ENCODE measurements at regions of chr11 and their contacts with region 1.

Region 1: GRCh38 chr11:34492806-34493414 is 20.7 kb downstream of the ELF5 start:
- DNase-seq: peak in 1 of 2 donors; percentile 27
- ATAC-seq: peak in 1 of 2 donors; percentile 56
- H3K4me3 ChIP-seq: no peak overlapping the region
- H3K27ac ChIP-seq: no peak overlapping the region
- H3K4me1 ChIP-seq: no peaks in the 10 kb centered on the region
- H3K27me3 ChIP-seq: no peaks in the 10 kb centered on the region
- CTCF ChIP-seq: peak; percentile 26 to 69 (median 53)
- POLR2A ChIP-seq: no peak

Region 2: GRCh38 chr11:33996498-33997454 is 496.1 kb before region 1 on chr11:
- in situ Hi-C with region 1: no loop called
- intact Hi-C with region 1: loop called (anchors 5 kb)
- DNase-seq: peak; percentile 41 to 63
- ATAC-seq: peak; percentile 98 to 99
- H3K4me3 ChIP-seq: peak overlapping the region in 1 of 4 donors; percentile 10
- H3K27ac ChIP-seq: no peak overlapping the region
- H3K4me1 ChIP-seq: no peaks in the 10 kb centered on the region
- H3K27me3 ChIP-seq: no peaks in the 10 kb centered on the region
- CTCF ChIP-seq: peak; percentile 71 to 83 (median 80)
- POLR2A ChIP-seq: no peak

Region 3: DNA sequence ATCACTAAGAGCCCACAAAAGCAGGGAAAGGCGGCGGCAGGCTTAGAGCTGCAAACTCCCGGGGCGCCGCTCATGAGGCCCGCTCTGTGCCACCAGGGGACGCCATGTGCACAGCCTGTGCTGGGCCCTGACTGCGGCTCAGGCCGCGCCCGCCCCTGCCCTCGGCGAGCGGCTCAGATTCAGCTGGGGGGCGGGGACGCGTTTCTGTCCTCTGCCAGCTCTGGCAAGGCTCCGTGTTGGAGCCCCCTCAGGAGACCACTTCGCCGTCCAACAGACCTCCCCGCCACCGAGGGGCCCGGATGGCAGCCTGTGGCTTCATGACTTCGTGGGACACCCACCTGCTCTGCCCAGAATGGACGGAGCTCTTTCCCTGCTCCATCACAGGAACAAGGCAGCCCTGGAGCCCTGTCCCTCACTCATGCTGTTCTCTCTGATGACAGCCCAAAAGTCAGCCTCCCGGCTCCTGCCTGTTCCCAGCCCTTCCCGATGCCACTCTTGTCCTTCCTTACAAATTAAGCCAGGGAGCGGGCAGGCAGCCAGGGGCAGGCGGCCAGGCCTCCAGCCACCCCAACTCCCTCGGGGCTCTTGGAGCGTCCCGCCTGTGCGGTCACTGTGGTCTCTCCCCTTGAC is 318.4 kb before region 1 on chr11:
- in situ Hi-C with region 1: loop called (anchors 25 kb)
- intact Hi-C with region 1: loop called (anchors 5 kb)
- DNase-seq: peak; percentile 62 to 68
- ATAC-seq: peak; percentile 84 to 93
- H3K4me3 ChIP-seq: peak overlapping the region; percentile 26 to 43 (median 33)
- H3K27ac ChIP-seq: peak overlapping the region in 3 of 4 donors; percentile 6 to 45 (median 12)
- H3K4me1 ChIP-seq: peaks cover 5 to 6% of the 10 kb centered on the region in 2 donors
- H3K27me3 ChIP-seq: no peaks in the 10 kb centered on the region
- CTCF ChIP-seq: peak; percentile 94 to 99 (median 97)
- POLR2A ChIP-seq: no peak

Region 4: GRCh38 chr11:34366522-34366921 is 126.4 kb before region 1 on chr11:
- in situ Hi-C with region 1: loop called in 2 of 4 experiments (anchors 10 kb)
- intact Hi-C with region 1: loop called (anchors 5 kb)
- DNase-seq: no peak
- ATAC-seq: no peak
- H3K4me3 ChIP-seq: no peak overlapping the region
- H3K27ac ChIP-seq: no peak overlapping the region
- H3K4me1 ChIP-seq: no peaks in the 10 kb centered on the region
- H3K27me3 ChIP-seq: no peaks in the 10 kb centered on the region
- CTCF ChIP-seq: peak in 1 of 5 experiments; percentile 31
- POLR2A ChIP-seq: no peak

Region 5: DNA sequence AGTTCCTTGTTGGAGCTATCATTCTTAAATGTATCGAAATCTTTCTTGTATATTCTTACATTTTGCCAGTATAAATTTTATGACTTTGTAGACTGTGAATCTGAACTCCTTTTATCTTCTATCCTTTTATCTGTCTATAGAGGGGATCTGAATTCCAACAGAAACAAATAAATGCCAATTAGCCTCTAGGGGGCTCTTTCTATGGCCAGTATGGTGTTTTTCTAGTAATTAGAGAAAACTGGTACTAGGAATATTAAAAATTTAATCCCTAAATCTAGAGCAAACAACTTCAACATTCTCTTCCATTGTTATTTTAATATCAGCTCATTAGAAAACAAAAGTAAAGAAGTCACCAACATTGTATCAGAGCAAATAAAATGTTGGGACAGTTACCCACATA is 75.7 kb before region 1 on chr11:
- in situ Hi-C with region 1: no loop called
- intact Hi-C with region 1: loop called (anchors 5 kb)
- DNase-seq: no peak
- ATAC-seq: no peak
- H3K4me3 ChIP-seq: no peak overlapping the region
- H3K27ac ChIP-seq: no peak overlapping the region
- H3K4me1 ChIP-seq: peaks cover 0 to 4% of the 10 kb centered on the region in 2 donors
- H3K27me3 ChIP-seq: no peaks in the 10 kb centered on the region
- CTCF ChIP-seq: no peak
- POLR2A ChIP-seq: no peak